A673 (cell line): ENCODE measurements at regions of chr10 and their contacts with region 1.

Region 1: GRCh38 chr10:88386821-88387773 is 196.0 kb downstream of the RNLS start:
- DNase-seq: peak; percentile 73
- H3K4me3 ChIP-seq: no peak overlapping the region
- H3K27ac ChIP-seq: no peak overlapping the region
- H3K4me1 ChIP-seq: peaks cover 14% of the 10 kb centered on the region
- H3K27me3 ChIP-seq: no peaks in the 10 kb centered on the region
- CTCF ChIP-seq: no peak

Region 2: DNA sequence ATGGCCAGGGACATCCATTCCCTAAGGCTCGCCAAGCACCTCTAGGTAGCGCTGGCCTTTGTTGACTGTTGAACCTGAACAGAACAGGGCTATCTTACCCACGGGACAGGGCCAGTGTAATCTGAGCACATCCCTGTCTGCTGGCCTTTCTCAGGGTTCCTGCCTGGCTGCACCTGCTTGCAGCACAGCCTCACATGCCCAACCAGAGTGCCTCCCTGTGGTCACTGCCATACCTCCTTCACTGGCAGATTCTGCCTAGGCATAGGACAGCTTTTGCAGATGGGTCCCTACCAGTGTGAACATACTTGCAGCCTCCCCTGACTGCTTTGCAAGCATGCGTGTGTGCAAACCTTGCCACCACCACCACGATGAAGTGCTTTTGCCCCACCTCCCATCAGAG is 356.9 kb after region 1 on chr10:
- CTCF ChIA-PET with region 1: no interaction called
- POLR2A ChIA-PET with region 1: interaction called, 17 read pairs
- intact Hi-C with region 1: no loop called
- DNase-seq: no peak
- H3K4me3 ChIP-seq: no peak overlapping the region
- H3K27ac ChIP-seq: no peak overlapping the region
- H3K4me1 ChIP-seq: no peaks in the 10 kb centered on the region
- H3K27me3 ChIP-seq: no peaks in the 10 kb centered on the region
- CTCF ChIP-seq: no peak

Region 3: GRCh38 chr10:89115876-89116627 is 729.0 kb after region 1 on chr10:
- CTCF ChIA-PET with region 1: no interaction called
- POLR2A ChIA-PET with region 1: no interaction called
- intact Hi-C with region 1: no loop called
- DNase-seq: peak; percentile 44
- H3K4me3 ChIP-seq: no peak overlapping the region
- H3K27ac ChIP-seq: no peak overlapping the region
- H3K4me1 ChIP-seq: peaks cover 6% of the 10 kb centered on the region
- H3K27me3 ChIP-seq: no peaks in the 10 kb centered on the region
- CTCF ChIP-seq: no peak

Region 4: DNA sequence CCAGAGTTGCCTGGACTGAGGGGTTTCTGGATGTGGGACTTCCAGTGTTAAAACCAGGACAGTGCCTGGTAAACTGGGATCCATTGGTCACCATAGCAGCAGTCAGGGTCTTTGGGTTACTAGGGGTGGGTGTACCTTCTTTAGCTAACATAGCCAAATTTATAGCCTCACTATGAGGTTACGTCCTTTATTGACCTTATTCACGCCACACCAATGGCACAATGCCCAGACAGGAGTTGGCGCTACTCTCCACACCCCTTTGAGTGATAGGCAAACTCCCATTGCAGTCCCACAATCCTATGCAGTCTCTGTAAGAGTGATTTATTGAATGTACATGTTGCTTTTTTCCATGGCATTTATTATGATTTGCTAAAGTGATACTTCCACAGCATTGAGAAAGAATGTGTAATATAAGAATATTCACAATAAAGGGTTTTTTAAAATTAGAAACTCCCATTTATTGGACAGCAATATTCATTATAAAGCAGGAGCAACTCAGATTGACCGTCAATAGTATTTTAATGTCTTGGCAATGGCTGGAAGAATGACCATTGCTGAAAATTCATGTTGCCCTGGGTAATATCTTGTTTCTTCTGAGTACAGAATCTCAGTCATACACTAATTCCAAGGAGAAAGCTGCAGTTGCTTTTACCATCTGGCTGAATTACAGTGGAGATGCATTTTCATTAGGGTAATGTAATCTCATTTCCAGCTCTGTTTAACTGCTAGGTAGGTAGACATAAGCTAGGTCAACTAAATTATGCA is 1053.3 kb after region 1 on chr10:
- CTCF ChIA-PET with region 1: interaction called, 13 read pairs
- POLR2A ChIA-PET with region 1: no interaction called
- intact Hi-C with region 1: no loop called
- DNase-seq: no peak
- H3K4me3 ChIP-seq: no peak overlapping the region
- H3K27ac ChIP-seq: no peak overlapping the region
- H3K4me1 ChIP-seq: no peaks in the 10 kb centered on the region
- H3K27me3 ChIP-seq: no peaks in the 10 kb centered on the region
- CTCF ChIP-seq: no peak